GM13977 (cell line): ENCODE measurements at regions of chr2 and their contacts with region 1.

Region 1: DNA sequence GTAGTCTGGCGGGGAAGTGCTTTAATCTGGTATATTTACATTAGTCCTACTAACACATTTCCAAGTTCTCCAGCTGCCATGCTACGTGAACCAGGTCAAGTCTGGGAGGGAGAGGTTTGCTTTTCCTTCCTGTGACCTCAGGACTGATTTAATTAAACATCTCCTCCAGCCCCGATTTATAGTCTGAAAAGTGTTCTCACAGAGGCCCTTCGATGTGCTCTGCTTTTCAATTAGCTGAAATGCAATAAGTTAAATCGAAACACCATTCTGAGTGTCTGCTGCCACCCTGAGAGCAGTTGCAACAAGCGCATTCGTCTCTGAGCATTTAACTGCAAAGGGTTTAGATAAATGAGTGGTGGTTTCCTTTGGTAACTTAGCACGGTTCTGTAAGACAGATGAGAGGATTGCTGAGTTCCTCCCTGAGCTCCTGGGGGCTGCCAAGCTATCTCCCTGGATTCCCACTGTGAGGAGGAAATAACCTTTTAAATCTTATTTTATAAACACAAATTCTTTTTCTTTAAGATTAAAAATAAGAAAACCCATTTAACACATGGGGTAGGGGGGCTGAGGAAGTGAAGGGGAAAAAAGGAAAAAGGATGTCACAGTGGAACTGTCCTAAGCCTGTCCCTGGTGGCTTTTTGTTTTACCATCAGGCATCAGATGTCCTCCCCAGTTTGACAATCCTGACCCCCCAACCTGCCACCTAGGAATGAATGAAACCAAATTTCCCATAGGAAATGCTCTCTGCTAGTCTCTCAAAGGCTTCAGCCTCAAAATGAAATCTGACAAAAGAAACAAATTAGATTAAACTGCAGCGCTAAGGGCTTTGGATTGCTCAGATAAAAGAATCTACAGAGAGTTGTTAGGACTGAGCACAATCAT is 56.5 kb upstream of the CREB1 start:
- DNase-seq: peak; percentile 22
- CTCF ChIP-seq: peak; percentile 82

Region 2: DNA sequence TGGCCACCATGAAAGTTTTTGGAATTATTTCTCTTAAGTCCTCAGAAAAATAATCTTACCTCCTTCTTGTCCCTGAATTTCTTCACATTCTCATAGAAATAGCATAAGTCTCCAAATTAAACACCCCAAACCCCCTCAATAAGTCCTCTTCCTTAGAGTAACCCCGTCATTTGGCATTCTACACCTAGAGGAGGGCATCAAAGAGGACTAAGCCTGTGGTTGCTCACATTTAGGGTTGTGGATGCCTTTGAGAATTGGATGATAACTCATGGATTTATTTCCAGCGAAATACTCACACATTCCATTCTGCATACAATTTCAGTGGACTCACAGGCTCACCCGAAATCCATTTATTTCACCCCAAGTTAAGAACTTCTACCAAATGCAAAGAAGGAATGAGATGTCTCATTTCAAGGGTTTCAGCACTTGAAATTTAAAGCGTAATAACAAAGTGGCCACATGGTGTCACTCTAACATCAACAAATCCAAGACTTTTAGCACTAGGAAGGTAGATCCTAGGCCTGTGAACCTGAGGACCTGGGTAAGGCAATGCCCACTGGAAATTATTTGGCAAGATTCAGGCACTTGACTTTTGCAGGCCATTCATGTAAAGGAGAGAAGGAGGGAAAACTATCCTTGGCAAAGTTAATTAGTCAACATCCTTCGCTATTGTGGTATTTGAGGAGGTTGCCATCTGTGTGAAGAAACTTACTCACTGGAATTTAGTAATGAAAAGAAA is 779.7 kb before region 1 on chr2:
- in situ Hi-C with region 1: loop called (anchors 10 kb)
- DNase-seq: peak; percentile 56
- CTCF ChIP-seq: peak; percentile 67

Region 3: DNA sequence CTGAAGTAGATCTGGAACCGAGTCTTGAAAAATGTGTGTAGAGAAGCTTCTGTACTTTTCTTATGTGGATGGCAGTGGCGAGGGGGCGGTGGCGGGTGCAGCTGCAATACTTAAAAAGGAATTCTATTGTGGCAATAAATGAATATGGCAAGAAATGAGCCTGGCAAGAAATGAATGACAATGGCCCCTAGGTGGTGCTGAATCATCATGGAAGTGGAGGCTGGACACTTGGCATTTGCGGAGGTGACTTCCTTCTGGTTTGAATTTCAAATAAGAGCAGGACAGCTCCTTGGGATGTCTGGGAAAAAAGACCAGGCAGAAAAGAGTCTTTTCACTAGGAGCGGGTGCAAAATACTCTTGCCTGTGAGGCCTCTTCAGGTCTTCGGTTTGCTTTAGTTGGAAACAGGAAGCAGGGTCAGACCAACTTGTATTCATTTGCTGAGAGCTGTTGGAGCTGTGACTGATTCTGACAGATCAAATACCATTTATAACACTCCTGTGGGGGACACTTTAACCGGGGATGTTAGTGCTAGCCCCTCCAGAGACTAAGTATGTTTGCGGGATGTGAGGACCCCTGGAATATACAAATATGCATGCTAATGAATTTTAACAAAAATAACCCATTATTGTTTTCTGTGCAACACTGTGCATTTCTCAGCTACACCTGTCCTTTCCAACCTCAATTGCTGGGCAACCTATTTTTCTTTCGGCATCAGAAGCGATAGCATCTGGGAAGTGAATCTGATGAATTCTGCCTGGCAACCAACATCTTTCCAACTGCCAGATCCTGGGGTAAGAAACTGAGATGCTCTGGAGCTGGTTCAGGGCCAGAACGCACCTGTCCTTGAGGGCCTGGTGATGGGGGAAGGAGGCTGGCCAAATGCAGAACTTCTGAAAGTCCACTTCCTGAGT is 672.5 kb before region 1 on chr2:
- in situ Hi-C with region 1: loop called (anchors 5 kb)
- DNase-seq: peak; percentile 26
- CTCF ChIP-seq: peak; percentile 83

Region 4: GRCh38 chr2:206981739-206982340 is 491.4 kb before region 1 on chr2:
- in situ Hi-C with region 1: loop called (anchors 10 kb)
- DNase-seq: peak; percentile 6
- CTCF ChIP-seq: peak; percentile 51